ENCODE measurements at regions of chr3 and their contacts with region 1.

Region 1: DNA sequence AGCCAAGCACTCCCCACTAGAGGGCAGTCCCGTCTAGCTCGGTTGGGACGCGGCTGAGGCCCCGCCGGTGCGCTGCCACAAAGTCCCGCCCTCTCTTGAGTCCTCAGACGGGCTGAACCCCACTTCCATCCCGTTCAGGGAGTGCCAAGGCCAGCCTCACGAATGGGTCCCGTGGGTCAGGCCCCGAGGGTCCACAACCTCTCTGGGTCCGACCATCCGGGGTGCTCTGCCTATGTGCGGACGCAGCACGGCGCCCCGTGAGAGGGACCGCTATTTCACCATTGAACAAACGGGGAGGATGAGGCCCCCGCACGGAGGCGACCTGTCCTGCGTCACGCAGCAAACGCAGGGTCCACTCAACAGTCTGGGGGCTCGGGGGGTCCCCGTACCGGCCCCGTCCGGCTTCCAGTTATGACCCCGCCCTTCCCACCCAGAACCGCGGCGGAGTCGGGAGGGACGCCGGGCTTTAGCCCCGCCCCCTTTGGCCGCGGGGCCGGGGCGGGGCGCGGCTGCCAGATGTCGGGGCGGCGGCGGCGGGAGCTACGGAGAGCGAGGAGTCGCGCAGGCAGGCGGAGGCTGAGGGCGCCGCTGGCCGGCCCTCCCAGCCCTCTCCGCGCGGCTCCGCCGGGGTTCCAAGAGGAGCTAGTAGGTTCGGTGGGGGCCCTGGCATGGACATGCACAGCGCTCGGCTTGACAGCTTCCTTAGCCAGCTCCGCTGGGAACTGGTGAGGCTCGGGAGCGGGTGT is at the start of gene INKA1:
- DNase-seq: peak; percentile 97
- H3K4me3 Mint-ChIP-seq: peak within 1 kb of the TSS; percentile 80
- H3K27ac Mint-ChIP-seq: peak within 1 kb of the TSS; percentile 35
- H3K4me1 Mint-ChIP-seq: peaks cover 35% of the 10 kb centered on the region
- H3K27me3 Mint-ChIP-seq: peaks cover 20% of the 10 kb centered on the region
- total RNA-seq, gene INKA1: 1.1 and 1.4 TPM in 2 replicates

Region 2: DNA sequence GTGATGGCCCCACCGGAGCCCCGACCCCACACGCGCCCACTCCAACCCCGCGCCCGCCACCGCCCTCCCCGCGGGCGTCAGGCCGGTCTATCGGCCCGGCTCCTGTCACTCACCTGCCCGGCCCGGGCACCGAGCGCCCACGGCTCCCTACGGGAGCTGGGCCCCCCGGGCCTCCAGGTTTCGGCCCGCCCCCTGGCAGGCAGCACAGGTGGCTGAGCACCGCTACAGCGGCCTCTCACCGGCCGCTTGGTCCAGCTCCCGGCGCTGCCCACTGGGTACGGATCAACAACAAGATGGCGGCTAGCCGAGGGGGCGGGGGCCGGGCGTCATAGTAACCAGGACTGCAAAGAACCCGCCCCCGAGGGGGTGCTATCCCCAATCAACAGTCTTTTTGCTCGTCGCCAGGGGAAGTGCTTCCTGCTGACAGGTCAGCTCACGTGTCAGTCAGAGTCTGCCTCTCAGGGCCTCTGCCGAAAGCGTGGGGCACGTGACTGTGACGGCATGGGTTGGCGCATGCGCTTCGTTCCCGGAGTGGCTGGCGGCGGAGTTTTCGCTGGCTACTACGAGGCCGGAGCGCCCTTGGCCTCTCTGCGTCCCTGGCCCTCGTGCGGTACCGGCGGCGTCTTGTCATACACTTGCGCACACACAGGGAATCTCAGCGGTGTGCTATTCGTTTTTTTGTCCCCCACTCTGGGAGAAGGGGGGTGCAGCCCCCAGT is 16.5 kb before region 1 on chr3 and contains the start of gene IP6K1:
- intact Hi-C with region 1: loop called (anchors 1 kb)
- DNase-seq: peak; percentile 100
- H3K4me3 Mint-ChIP-seq: peak within 1 kb of the TSS; percentile 93
- H3K27ac Mint-ChIP-seq: peak within 1 kb of the TSS; percentile 94
- H3K4me1 Mint-ChIP-seq: peaks cover 25% of the 10 kb centered on the region
- H3K27me3 Mint-ChIP-seq: peaks cover 5% of the 10 kb centered on the region
- total RNA-seq, gene IP6K1: 39.6 and 42.2 TPM in 2 replicates

Region 3: GRCh38 chr3:49813497-49814174 is 10.7 kb after region 1 on chr3 and contains the start of gene UBA7:
- intact Hi-C with region 1: loop called (anchors 1 kb)
- DNase-seq: peak; percentile 86
- H3K4me3 Mint-ChIP-seq: peak within 1 kb of the TSS; percentile 96
- H3K27ac Mint-ChIP-seq: peak within 1 kb of the TSS; percentile 95
- H3K4me1 Mint-ChIP-seq: peaks cover 29% of the 10 kb centered on the region
- H3K27me3 Mint-ChIP-seq: no peaks in the 10 kb centered on the region
- total RNA-seq, gene UBA7: 91.7 and 93.6 TPM in 2 replicates

Region 4: DNA sequence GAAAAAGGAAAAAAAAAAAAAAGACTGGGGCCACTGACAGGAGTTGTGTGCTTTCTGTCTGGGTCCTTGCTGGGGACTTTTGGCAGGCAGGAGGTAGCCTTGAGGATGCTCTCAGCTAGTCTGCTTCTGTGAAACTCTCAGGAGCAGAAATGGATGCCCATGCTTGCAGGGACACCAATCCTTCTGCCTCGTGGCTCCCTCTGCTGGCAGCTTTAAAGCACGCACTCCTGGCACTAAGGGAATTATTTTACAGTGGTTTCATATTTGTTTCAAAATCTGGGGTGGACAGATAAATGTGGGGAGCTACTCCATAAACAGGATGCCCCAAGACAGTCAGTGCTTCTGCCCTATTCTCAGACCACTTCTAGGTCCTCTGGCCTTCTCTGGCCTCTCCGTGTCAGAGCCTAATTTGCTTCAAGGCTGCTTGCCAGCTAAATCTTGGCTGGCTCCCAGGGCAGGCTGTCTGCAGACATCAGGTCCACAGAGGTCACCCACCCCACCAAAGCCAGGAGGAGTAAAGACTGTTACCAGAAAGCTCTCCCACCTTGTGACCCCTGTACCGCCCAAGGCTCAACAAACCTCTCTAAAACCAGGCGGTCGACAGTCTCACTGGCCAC is 36.4 kb after region 1 on chr3:
- intact Hi-C with region 1: loop called (anchors 1 kb)
- DNase-seq: peak; percentile 94
- H3K4me3 Mint-ChIP-seq: no peak overlapping the region
- H3K27ac Mint-ChIP-seq: no peak overlapping the region
- H3K4me1 Mint-ChIP-seq: peaks cover 3% of the 10 kb centered on the region
- H3K27me3 Mint-ChIP-seq: no peaks in the 10 kb centered on the region

Region 5: DNA sequence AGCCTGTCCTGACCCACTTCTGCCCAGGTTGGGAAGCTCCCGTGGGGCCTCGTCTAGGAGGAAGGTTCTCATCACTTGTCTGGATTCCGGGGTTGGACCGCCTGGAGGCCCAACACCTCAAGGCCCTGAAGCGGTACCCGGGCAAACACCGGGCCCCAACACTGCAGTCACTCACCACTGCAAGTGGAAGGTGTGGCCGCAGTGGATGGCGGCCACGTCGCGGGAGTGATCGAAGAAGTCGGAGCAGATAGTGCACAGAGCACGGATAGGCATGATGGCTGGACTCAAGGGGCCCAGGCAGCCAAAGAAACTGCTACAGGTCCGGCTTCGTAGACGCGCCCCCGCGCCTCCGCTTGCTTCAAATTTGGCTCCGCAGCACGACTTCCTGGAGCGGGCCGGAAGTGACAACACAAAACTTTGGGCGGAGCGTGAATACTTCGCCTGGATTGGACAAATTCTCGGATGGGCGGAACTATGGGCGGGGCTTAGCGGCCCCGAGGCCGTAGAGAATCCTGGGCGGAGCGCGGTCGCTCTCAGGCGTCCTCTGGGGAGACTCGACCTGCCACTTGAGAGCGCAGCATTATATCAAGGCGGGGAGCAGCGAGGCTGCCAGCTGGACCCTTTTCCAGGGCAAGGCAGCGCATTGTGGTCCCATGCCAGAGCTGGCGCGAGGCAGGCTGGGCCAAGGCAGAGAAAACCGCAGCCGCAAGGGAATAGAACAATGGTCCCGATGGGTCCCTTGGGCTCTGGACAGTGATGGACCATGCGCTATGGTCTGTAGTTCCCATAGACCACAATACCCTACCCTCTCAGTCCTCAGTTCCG is 53.5 kb after region 1 on chr3 and contains the start of gene TRAIP:
- intact Hi-C with region 1: loop called (anchors 5 kb)
- DNase-seq: peak; percentile 99
- H3K4me3 Mint-ChIP-seq: peak within 1 kb of the TSS; percentile 97
- H3K27ac Mint-ChIP-seq: peak within 1 kb of the TSS; percentile 92
- H3K4me1 Mint-ChIP-seq: peaks cover 15% of the 10 kb centered on the region
- H3K27me3 Mint-ChIP-seq: no peaks in the 10 kb centered on the region
- total RNA-seq, gene TRAIP: 27.1 and 30.4 TPM in 2 replicates

Region 6: GRCh38 chr3:49906004-49906743 is 103.3 kb after region 1 on chr3:
- intact Hi-C with region 1: loop called (anchors 1 kb)
- DNase-seq: peak; percentile 85
- H3K4me3 Mint-ChIP-seq: peak overlapping the region; percentile 73
- H3K27ac Mint-ChIP-seq: peak overlapping the region; percentile 80
- H3K4me1 Mint-ChIP-seq: peaks cover 30% of the 10 kb centered on the region
- H3K27me3 Mint-ChIP-seq: no peaks in the 10 kb centered on the region

Region 7: DNA sequence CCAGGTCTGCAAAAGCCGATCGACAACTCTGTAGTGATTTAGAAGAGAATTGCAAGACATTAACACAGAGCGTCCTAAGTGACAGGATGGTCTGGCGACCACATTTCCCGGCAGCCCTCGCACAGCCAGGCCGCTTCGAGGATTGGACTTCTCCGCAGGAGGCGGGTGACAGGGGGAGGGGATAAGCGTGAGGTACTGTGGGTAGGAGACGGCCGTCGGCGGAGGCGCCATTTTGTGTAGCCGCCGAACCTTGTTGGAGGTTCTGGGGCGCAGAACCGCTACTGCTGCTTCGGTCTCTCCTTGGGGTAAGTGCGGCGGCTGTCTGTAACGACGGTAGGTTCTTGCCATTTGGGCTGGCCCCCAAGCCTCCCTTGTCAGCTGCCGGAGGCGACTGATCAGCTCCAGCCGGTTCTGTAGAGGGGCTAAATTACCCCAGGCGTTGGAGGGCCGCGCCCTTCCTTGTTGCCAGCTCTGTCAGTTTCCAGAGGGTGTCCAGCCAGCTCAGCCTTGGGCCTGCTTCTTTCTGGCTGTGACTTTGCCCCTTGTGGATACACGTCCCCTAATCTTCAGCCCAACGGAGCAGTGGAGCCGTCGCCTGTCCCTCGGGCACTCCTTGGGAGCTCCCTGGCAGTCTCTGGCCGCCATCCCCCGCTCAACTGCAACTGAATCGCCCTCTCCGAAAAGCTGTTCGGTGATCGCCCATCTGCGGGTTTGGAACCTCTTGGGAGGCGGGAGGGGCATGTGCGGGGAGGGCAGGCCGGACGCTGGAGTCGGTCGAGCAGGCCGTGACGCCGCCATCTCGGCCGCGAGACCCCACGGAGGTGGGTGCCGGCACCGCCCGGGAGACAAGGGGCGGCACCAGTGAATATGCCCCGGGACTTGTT is 286.1 kb after region 1 on chr3 and contains the start of gene RBM5:
- intact Hi-C with region 1: loop called (anchors 5 kb)
- DNase-seq: peak; percentile 98
- H3K4me3 Mint-ChIP-seq: peak within 1 kb of the TSS; percentile 98
- H3K27ac Mint-ChIP-seq: peak within 1 kb of the TSS; percentile 97
- H3K4me1 Mint-ChIP-seq: peaks cover 21% of the 10 kb centered on the region
- H3K27me3 Mint-ChIP-seq: no peaks in the 10 kb centered on the region
- total RNA-seq, gene RBM5: 154 and 161 TPM in 2 replicates